GM12878 (cell line): ENCODE measurements at regions of chr2 and their contacts with region 1.

Region 1: GRCh38 chr2:199025146-199025545 is 432.6 kb downstream of the SATB2 start:
- DNase-seq: no peak
- ATAC-seq: no peak
- H3K4me3 ChIP-seq: no peak overlapping the region
- H3K27ac ChIP-seq: no peak overlapping the region
- H3K4me1 ChIP-seq: no peaks in the 10 kb centered on the region
- H3K27me3 ChIP-seq: no peaks in the 10 kb centered on the region
- CTCF ChIP-seq: no peak
- EP300 ChIP-seq: no peak
- POLR2A ChIP-seq: no peak
- RAD21 ChIP-seq: no peak

Region 2: GRCh38 chr2:198815626-198816025 is 209.5 kb before region 1 on chr2:
- CTCF ChIA-PET with region 1: no interaction called
- POLR2A ChIA-PET with region 1: no interaction called
- RAD21 ChIA-PET with region 1: no interaction called
- SMC1A ChIA-PET with region 1: no interaction called
- in situ Hi-C with region 1: no loop called
- intact Hi-C with region 1: no loop called
- DNase-seq: no peak
- ATAC-seq: no peak
- H3K4me3 ChIP-seq: no peak overlapping the region
- H3K27ac ChIP-seq: no peak overlapping the region
- H3K4me1 ChIP-seq: no peaks in the 10 kb centered on the region
- H3K27me3 ChIP-seq: no peaks in the 10 kb centered on the region
- CTCF ChIP-seq: no peak
- EP300 ChIP-seq: no peak
- POLR2A ChIP-seq: no peak
- RAD21 ChIP-seq: no peak

Region 3: DNA sequence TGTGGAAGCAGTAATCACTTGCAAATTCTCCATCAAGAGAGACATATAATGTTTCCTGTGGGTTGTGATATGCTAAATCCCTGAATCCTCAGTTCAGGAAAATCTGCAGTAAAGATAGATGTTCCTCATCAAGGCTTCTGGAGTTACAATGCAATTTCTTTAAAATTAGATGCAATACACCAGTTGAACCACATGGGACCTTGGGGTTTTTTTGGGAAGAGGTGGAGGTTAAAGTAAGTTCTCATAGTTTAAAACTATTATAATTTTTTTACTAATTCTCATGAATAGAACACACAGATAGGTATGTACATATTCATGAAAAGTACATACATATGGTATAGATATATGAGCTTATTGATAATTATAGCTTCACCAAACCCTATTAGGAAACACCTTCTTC is 63.6 kb before region 1 on chr2:
- CTCF ChIA-PET with region 1: no interaction called
- POLR2A ChIA-PET with region 1: no interaction called
- RAD21 ChIA-PET with region 1: no interaction called
- SMC1A ChIA-PET with region 1: no interaction called
- in situ Hi-C with region 1: no loop called
- intact Hi-C with region 1: no loop called
- DNase-seq: no peak
- ATAC-seq: no peak
- H3K4me3 ChIP-seq: no peak overlapping the region
- H3K27ac ChIP-seq: no peak overlapping the region
- H3K4me1 ChIP-seq: no peaks in the 10 kb centered on the region
- H3K27me3 ChIP-seq: no peaks in the 10 kb centered on the region
- CTCF ChIP-seq: peak in 1 of 3 experiments; percentile 21; a peak in 1 of 6 replicates
- EP300 ChIP-seq: no peak
- POLR2A ChIP-seq: no peak
- RAD21 ChIP-seq: no peak

Region 4: DNA sequence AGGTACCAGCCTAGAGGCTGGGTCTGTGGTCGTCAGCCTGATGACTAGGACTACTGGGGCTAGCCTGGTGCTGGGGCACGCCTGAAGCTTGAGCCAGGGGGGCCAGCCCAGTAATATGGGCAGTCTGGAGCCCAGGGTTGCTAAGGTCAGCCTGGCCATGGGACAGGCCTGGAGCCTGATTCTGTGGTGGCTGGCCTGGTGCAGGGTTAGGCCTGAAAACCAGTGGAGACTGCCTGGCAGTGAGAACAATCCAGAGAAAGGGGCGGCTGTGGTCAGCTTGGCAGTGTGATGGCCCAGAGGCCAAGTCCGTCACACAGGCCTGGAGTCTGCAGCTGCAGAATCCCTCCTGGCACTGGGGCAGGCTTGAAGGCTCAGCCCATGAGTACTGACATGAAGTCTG is 13.2 kb before region 1 on chr2:
- CTCF ChIA-PET with region 1: interaction called, 9 read pairs
- POLR2A ChIA-PET with region 1: no interaction called
- RAD21 ChIA-PET with region 1: interaction called, 7 read pairs
- SMC1A ChIA-PET with region 1: interaction called, 11 read pairs
- in situ Hi-C with region 1: no loop called
- intact Hi-C with region 1: no loop called
- DNase-seq: no peak
- ATAC-seq: no peak
- H3K4me3 ChIP-seq: no peak overlapping the region
- H3K27ac ChIP-seq: no peak overlapping the region
- H3K4me1 ChIP-seq: no peaks in the 10 kb centered on the region
- H3K27me3 ChIP-seq: no peaks in the 10 kb centered on the region
- CTCF ChIP-seq: no peak
- EP300 ChIP-seq: no peak
- POLR2A ChIP-seq: no peak
- RAD21 ChIP-seq: no peak